ENCODE measurements at regions of chr2 and their contacts with region 1.

Region 1: GRCh38 chr2:164903204-164903603 is 52.1 kb downstream of the SLC38A11 start:
- DNase-seq: peak; percentile 69
- H3K4me3 ChIP-seq: no peak overlapping the region
- H3K27ac ChIP-seq: no peak overlapping the region
- H3K4me1 ChIP-seq: peaks cover 19% of the 10 kb centered on the region
- H3K27me3 ChIP-seq: no peaks in the 10 kb centered on the region
- CTCF ChIP-seq: no peak
- POLR2A ChIP-seq: no peak

Region 2: GRCh38 chr2:162994709-162995108 is 1908.5 kb before region 1 on chr2:
- CTCF ChIA-PET with region 1: no interaction called
- POLR2A ChIA-PET with region 1: no interaction called
- dilution Hi-C with region 1: no loop called
- intact Hi-C with region 1: loop called (anchors 5 kb)
- DNase-seq: no peak
- H3K4me3 ChIP-seq: no peak overlapping the region
- H3K27ac ChIP-seq: no peak overlapping the region
- H3K4me1 ChIP-seq: no peaks in the 10 kb centered on the region
- H3K27me3 ChIP-seq: no peaks in the 10 kb centered on the region
- CTCF ChIP-seq: no peak
- POLR2A ChIP-seq: no peak

Region 3: GRCh38 chr2:164890544-164890943 is 12.7 kb before region 1 on chr2:
- CTCF ChIA-PET with region 1: interaction called, 11 read pairs
- POLR2A ChIA-PET with region 1: no interaction called
- dilution Hi-C with region 1: no loop called
- intact Hi-C with region 1: no loop called
- DNase-seq: no peak
- H3K4me3 ChIP-seq: no peak overlapping the region
- H3K27ac ChIP-seq: no peak overlapping the region
- H3K4me1 ChIP-seq: no peaks in the 10 kb centered on the region
- H3K27me3 ChIP-seq: no peaks in the 10 kb centered on the region
- CTCF ChIP-seq: no peak
- POLR2A ChIP-seq: no peak

Measured in endothelial cell of umbilical vein (primary cell).